Right cardiac atrium (tissue), 5 donors: ENCODE measurements at regions of chr16 and their contacts with region 1.

Region 1: DNA sequence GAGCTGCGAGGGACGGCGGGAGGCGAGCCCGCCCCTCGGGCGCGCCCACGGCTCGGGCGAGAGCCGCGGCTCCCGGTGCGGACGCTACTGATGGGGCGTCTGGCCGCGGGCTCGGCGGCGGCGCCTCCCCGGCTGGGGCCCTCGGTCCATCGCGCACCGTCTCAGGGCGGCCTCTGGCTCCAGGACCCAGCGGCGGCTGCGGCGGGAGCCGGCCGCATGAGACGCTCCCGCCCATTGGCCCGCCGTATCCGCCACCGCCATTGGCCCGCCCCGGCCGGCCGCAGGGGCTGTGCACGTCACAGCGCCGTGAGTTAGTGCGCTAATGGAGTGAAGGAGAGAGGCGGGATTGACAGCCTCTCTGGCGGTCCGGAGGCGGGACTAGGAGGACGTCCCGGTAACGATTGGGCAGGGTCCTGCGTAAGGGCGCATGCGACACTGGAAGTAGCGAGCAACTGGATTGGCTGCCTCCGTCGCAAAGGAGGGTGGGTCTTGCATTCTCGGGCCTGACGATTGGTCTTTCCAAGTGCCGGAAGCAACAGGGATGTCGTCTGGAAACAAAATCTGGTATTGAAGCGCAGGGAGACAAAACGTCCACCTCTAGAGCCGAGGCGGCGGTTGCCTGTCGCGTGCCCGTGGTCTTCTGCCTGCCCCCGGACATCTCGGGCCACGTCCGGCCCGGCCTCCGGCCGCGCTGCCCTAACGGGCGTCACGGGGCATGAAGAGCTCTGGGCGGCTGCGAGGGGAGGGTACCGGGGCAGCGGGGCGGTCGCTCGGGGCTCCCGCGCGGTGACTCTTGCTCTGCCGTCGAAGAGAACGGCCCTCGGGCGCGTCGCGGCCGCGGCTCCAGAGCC is at the start of gene ANKRD11:
- DNase-seq: peak; percentile 99 to 100 (median 99)
- ATAC-seq: peak; percentile 98 to 99
- H3K4me3 ChIP-seq: peak within 1 kb of the TSS; percentile 100
- H3K27ac ChIP-seq: peak within 1 kb of the TSS; percentile 95
- H3K4me1 ChIP-seq: peaks cover 8% of the 10 kb centered on the region
- H3K27me3 ChIP-seq: no peaks in the 10 kb centered on the region
- total RNA-seq, gene ANKRD11: 92.6 to 98.9 (median 96.9) TPM

Region 2: DNA sequence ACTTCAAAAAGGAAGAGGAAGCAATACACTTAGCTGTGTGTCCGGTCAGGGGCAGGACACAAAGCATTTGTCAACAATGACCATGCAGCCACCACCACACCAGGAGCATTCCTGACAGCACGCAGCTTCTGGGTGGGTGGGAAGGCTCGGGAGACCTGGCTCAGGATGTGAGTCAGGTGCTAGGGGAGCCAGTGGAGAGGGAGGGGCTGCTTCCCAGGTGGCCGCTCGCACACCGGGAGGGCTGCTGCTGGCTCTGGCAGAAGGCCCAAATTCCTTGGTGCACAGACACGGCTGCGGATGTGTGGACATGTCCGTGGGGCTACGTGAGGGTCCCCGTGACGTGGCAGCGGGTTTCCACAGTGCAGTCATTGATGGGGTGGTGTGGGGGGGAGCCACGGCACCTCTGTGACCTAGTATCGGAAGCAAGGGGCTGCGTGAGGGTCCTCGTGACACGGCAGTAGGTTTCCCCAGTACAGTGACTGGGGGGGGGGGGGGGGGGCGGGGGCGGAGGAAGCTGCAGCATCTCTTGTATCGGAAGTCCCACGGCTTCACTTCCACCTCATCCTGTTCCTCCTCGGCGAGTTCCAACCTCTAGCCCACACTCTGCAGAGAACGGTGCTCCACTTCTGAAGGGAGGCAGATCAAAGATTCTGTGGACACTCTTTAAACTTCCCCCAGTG is 160.3 kb before region 1 on chr16:
- intact Hi-C with region 1: loop called in 3 of 4 experiments (anchors 5 to 10 kb)
- DNase-seq: peak in 2 of 3 donors; percentile 67 to 72
- ATAC-seq: peak in 1 of 2 donors; percentile 8
- H3K4me3 ChIP-seq: no peak overlapping the region
- H3K27ac ChIP-seq: peak overlapping the region; percentile 28
- H3K4me1 ChIP-seq: peaks cover 28% of the 10 kb centered on the region
- H3K27me3 ChIP-seq: no peaks in the 10 kb centered on the region

Region 3: DNA sequence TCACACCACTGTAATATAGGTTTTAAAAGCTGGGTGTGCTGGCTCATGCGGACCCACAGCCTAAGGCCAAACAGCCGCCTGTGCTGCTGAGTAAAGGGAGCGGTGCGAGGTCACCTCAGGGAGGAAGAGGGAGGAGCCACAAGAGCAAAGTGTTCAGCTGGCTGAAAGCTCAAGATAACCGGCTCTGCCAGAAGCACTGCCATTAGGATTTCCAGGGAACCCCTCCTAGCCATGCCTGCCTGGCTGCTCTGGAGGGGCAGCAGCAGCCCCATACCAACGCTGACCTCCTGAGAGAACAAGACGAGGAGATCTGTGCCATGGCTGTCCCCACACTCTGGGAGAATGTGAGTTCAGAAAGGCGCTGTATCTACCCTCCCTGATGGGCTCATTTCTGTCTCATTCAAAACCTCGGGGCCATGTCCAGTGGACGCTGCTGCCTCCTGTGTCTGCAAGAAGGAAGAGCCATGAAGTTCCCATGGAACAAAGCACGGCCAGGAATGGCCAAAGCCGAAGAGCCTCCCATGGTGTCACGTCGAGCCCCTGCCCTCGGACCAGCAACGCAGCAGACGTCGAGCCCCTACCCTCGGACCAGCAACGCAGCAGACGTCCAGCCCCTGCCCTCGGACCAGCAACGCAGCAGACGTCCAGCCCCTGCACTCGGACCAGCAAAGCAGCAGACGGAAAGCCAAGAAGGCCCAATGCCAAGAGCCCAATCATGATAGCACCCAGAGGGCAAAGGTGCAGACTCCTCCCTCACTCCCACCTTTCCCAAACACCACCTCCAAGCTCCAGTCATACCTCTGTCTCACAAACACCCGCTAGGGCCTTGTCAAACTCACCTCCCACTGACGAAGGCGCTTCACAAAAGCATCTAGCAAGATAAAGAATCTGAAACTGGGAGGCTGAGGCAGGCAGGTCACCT is 107.3 kb before region 1 on chr16:
- intact Hi-C with region 1: no loop called
- DNase-seq: peak in 2 of 3 donors; percentile 51 to 80
- ATAC-seq: peak; percentile 79 to 83
- H3K4me3 ChIP-seq: no peak overlapping the region
- H3K27ac ChIP-seq: peak overlapping the region; percentile 38
- H3K4me1 ChIP-seq: peaks cover 36% of the 10 kb centered on the region
- H3K27me3 ChIP-seq: no peaks in the 10 kb centered on the region

Region 4: DNA sequence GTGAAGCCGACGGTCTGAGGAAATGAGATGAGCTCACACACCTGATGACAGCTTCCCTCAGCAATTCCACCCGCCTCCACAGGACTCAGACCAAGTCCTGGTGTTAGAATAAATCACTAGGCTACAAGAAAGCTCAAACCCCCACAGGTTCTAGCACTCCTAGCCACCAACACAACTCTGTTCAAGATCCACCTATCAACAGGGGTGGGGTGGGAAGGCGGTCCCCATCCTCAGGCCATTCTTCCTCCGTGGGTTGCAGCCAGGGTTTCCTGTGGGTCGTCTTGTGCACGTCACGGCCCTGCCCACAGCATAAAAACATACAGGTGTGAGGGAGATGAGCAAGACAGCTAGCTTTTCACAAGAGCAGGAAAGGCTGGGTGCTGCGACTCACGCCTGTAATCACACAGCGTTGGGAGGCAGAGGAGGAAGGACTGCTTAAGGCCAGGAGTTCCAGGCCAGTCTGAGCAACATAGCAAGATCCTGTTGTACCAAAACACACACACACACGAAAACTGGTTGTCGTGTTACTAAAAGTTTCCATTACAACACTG is 81.4 kb before region 1 on chr16:
- intact Hi-C with region 1: loop called in 1 of 4 experiments (anchors 10 kb)
- DNase-seq: peak in 1 of 3 donors; percentile 58
- ATAC-seq: peak in 1 of 2 donors; percentile 1
- H3K4me3 ChIP-seq: no peak overlapping the region
- H3K27ac ChIP-seq: no peak overlapping the region
- H3K4me1 ChIP-seq: peaks cover 52% of the 10 kb centered on the region
- H3K27me3 ChIP-seq: no peaks in the 10 kb centered on the region

Region 5: GRCh38 chr16:89785523-89786155 is 295.0 kb after region 1 on chr16:
- intact Hi-C with region 1: no loop called
- DNase-seq: no peak
- ATAC-seq: no peak
- H3K4me3 ChIP-seq: no peak overlapping the region
- H3K27ac ChIP-seq: no peak overlapping the region
- H3K4me1 ChIP-seq: no peaks in the 10 kb centered on the region
- H3K27me3 ChIP-seq: no peaks in the 10 kb centered on the region